PC-9 (cell line): ENCODE measurements at regions of chr18 and their contacts with region 1.

Region 1: GRCh38 chr18:12397254-12397653 is 10.5 kb upstream of the PRELID3A start:
- DNase-seq: no peak
- H3K4me3 ChIP-seq: no peak overlapping the region
- H3K27ac ChIP-seq: no peak overlapping the region
- H3K4me1 ChIP-seq: peaks cover 6% of the 10 kb centered on the region
- H3K27me3 ChIP-seq: no peaks in the 10 kb centered on the region
- CTCF ChIP-seq: no peak

Region 2: GRCh38 chr18:12597775-12598174 is 200.5 kb after region 1 on chr18:
- CTCF ChIA-PET with region 1: no interaction called
- POLR2A ChIA-PET with region 1: no interaction called
- intact Hi-C with region 1: loop called (anchors 5 kb)
- DNase-seq: peak; percentile 86 to 92
- H3K4me3 ChIP-seq: no peak overlapping the region
- H3K27ac ChIP-seq: peak overlapping the region; percentile 90
- H3K4me1 ChIP-seq: peaks cover 54% of the 10 kb centered on the region
- H3K27me3 ChIP-seq: no peaks in the 10 kb centered on the region
- CTCF ChIP-seq: no peak

Region 3: GRCh38 chr18:12947355-12948041 is 550.2 kb after region 1 on chr18 and contains the start of gene SEH1L:
- CTCF ChIA-PET with region 1: no interaction called
- POLR2A ChIA-PET with region 1: no interaction called
- intact Hi-C with region 1: loop called (anchors 5 kb)
- DNase-seq: peak; percentile 81 to 98
- H3K4me3 ChIP-seq: peak within 1 kb of the TSS; percentile 98
- H3K27ac ChIP-seq: peak within 1 kb of the TSS; percentile 95
- H3K4me1 ChIP-seq: peaks cover 32% of the 10 kb centered on the region
- H3K27me3 ChIP-seq: no peaks in the 10 kb centered on the region
- CTCF ChIP-seq: no peak
- total RNA-seq, gene SEH1L: 98.3 and 101 TPM in 2 replicates

Region 4: DNA sequence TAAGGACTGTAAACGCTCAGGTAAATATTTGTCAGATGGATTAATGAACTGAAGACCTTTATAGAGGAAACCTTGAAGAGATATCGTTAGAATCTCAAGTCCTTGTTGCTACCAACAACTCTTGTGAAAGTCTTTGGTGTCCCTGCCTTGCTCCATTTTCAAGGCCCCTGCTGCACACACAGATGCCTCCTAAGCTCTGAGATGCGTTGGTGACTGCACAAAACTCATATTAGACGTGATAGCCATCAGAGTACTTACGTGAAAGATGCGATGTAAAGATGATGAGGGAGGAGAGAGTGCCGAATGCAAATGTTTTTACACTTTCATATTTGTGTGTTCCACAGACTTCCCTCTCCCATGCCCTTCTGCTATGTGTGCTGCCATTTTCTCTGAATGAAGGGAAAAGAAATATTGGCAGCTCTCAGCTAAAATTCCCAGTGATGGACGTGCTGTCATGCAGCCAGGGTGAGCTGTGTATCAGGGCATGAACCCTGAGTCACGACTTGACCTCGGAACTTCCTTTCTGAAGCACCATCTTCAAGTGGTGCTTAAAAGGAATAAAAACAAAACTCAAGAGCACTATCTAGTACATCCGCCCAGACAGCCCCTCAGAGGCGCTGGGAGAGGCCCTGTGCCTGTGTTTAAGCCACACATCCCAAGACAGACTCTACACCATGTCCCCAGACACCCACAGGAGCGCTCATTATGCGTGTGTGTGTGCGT is 1211.7 kb after region 1 on chr18:
- CTCF ChIA-PET with region 1: no interaction called
- POLR2A ChIA-PET with region 1: no interaction called
- intact Hi-C with region 1: no loop called
- DNase-seq: no peak
- H3K4me3 ChIP-seq: no peak overlapping the region
- H3K27ac ChIP-seq: no peak overlapping the region
- H3K4me1 ChIP-seq: no peaks in the 10 kb centered on the region
- H3K27me3 ChIP-seq: peaks cover 61% of the 10 kb centered on the region
- CTCF ChIP-seq: no peak